ENCODE measurements at regions of chr11 and their contacts with region 1.

Region 1: DNA sequence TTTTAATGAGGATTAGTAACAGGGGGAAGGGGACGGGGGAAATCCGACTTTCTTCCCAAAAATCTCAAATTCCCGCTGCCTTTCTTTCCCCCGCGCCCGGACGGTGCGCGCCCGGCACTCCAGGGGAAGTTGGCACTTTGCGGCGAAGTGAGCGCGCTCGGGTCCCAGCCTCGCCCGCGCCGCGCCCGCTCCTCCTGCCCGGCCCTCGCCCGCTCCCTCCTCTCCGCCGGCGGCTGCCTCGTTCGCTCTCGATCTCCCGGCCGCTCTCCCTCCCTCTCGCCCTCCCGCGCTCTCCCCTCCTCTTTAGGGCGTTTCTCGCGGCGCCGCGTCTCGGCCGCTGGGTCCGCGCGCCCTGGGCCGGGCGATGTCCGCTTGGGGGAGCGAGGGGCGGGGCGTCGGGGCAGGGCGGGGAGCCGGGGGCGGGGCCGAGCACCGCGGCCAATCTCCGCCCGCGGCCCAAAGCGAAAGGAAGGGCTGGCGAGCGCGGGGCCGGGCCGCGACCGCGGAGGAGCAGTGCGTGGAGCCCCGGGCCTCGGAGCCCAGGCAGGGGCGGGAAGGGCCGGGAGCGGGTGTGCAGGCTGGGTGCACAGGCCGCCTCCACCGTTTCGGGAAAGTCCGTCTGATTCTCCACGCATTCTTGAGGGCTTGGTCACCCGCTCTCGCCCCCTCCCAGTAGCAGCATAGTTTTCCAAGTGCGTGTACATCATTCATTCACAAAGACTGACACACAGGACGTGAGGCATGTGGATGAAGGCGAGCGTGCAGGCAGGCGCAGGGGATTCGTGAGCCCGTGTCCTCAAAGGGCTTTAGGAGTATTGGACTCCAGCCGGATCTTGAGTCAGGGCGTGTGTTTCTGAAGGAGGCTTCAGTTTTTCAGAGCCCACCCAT is 65.1 kb downstream of the ETS1 start:
- DNase-seq: peak; percentile 81 to 90 (median 87)
- H3K4me3 ChIP-seq: peak overlapping the region; percentile 50 to 92
- H3K4me3 Mint-ChIP-seq: peak overlapping the region; percentile 92 to 100 (median 97)
- H3K27ac ChIP-seq: peak overlapping the region; percentile 89
- H3K27ac Mint-ChIP-seq: peak overlapping the region; percentile 96 to 99 (median 98)
- H3K4me1 ChIP-seq: peaks cover 45% of the 10 kb centered on the region
- H3K4me1 Mint-ChIP-seq: peaks cover 33 to 59% (median 44%) of the 10 kb centered on the region in 4 donors
- H3K27me3 ChIP-seq: no peaks in the 10 kb centered on the region
- H3K27me3 Mint-ChIP-seq: no peaks in the 10 kb centered on the region

Region 2: DNA sequence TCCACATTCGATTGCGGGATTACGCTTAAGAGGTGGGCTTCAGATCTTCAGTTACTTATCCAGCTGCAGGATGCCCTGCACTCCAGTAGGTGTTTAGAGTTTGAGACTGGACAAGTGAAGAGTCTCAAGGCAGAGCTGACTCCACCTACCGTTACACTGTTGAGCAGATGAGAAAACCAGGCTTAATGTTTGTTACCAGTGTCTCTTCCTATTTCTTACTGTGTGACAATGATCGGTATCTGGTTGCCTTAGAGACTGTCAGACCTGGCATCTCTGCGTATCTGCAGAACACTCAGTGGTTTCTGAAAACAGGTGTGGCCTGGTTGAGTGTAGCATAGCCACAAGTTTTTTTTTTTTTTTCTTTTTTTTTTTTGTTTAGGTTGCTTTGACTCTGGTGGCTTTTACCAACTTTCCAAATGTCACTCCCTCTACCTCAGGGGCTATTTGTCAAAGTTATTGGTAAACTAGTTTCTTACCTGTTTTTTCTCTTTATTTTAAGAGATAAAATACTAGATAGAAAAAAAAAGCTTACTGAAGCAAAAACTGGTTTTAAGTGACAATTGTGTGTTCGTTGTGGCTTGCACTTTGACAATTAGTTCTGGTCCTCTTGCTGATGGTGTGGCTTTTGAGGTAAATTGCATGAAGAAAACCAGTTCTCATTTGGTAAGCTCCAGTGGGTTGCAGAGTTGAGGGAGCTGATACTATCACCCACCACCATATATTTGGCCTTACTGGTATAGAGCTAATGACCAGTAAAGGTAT is 219.7 kb before region 1 on chr11:
- CTCF ChIA-PET with region 1: interaction called, 19 read pairs
- POLR2A ChIA-PET with region 1: interaction called, 888 read pairs
- intact Hi-C with region 1: loop called (anchors 1 kb)
- DNase-seq: peak; percentile 88 to 96 (median 94)
- H3K4me3 ChIP-seq: peak overlapping the region; percentile 54 to 77
- H3K4me3 Mint-ChIP-seq: peak overlapping the region; percentile 90 to 95 (median 92)
- H3K27ac ChIP-seq: peak overlapping the region; percentile 93
- H3K27ac Mint-ChIP-seq: peak overlapping the region; percentile 95 to 100 (median 98)
- H3K4me1 ChIP-seq: peaks cover 98% of the 10 kb centered on the region
- H3K4me1 Mint-ChIP-seq: peaks cover 72 to 97% (median 86%) of the 10 kb centered on the region in 4 donors
- H3K27me3 ChIP-seq: no peaks in the 10 kb centered on the region
- H3K27me3 Mint-ChIP-seq: no peaks in the 10 kb centered on the region

Region 3: DNA sequence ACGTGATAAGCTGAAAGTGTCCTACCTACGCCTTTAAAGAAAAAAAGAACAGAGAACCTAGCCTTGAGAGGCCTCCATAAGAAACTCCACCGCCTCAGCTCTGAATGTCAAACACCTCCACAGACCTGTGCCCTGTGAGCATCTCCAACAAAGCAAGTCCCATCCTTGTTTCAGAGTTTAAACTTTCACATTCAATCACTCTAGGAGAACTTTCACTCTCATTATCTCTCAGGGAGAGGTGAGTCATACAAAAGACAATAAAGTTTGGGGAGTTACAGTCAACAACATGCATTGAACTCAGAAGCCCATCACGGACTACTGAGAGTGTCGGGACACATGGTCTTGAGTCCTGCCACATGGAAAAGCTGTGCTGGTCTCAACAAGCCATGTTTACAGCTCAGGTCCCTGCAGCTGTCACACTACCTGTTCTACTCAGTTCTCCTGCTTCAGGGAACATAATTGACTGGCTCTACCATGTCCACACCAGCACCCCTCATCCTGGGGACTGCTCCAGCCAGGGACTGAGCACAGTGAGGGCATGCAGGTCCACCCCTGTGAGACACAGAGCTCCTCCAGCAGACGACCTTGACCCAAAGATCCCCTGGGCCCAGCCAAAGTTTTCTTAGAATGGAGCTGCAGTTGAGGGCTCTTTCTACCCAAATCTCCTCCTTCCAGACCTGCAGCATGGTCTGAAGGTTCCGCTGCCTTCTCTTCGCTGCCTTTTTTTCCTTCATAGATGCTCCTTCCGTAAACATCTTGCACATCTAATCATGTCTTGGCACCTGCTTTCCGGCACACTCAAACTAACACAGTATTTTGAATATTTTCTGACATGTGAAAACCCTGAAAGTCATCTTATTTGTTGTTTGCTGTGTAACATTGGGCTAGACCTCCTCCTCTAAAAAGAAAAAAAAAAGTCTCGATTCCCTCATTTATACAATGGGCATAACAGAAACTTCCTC is 49.9 kb before region 1 on chr11:
- CTCF ChIA-PET with region 1: interaction called, 31 read pairs
- POLR2A ChIA-PET with region 1: interaction called, 1,488 read pairs
- intact Hi-C with region 1: loop called (anchors 2 kb)
- DNase-seq: peak in 4 of 5 donors; percentile 51 to 82 (median 57)
- H3K4me3 ChIP-seq: peak overlapping the region; percentile 5 to 27
- H3K4me3 Mint-ChIP-seq: peak overlapping the region; percentile 70 to 93 (median 84)
- H3K27ac ChIP-seq: peak overlapping the region; percentile 94
- H3K27ac Mint-ChIP-seq: peak overlapping the region; percentile 98 to 99 (median 99)
- H3K4me1 ChIP-seq: peaks cover 100% of the 10 kb centered on the region
- H3K4me1 Mint-ChIP-seq: peaks cover 85 to 98% (median 92%) of the 10 kb centered on the region in 4 donors
- H3K27me3 ChIP-seq: no peaks in the 10 kb centered on the region
- H3K27me3 Mint-ChIP-seq: no peaks in the 10 kb centered on the region

Region 4: DNA sequence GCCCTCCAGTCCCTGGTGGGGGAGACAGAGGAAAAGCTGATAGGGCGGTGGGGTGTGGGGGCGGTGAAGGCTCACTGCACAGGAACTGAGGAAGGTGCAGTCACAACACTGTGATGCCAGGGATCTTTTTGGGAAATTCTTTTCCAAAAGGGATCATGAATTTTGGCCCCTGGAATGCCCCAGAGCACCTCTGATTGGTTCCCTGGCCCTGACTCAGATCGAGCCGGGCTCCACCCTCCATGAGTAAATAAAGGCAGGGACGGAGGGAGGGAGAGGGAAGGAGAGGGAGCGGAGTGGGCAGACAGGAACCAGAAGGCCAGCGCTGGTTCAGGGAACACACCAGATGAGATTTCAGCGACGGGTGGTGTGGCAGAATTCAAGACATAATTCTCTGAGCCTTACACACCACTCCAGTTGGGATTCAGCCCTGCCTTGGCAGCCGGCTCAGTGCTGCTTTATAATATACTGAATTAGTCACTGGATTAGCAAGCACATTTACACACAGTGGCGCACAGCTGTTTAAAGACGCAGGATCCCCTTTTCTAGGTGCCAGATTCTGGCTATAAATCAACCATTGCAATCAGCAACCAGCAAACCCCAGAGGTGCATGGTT is 15.2 kb before region 1 on chr11:
- CTCF ChIA-PET with region 1: interaction called, 81 read pairs
- POLR2A ChIA-PET with region 1: interaction called, 1,008 read pairs
- intact Hi-C with region 1: loop called (anchors 1 kb)
- DNase-seq: peak in 1 of 5 donors; percentile 77
- H3K4me3 ChIP-seq: peak overlapping the region; percentile 37 to 39
- H3K4me3 Mint-ChIP-seq: peak overlapping the region; percentile 81 to 100 (median 94)
- H3K27ac ChIP-seq: peak overlapping the region; percentile 89
- H3K27ac Mint-ChIP-seq: peak overlapping the region; percentile 92 to 99 (median 98)
- H3K4me1 ChIP-seq: peaks cover 100% of the 10 kb centered on the region
- H3K4me1 Mint-ChIP-seq: peaks cover 80 to 100% (median 89%) of the 10 kb centered on the region in 4 donors
- H3K27me3 ChIP-seq: no peaks in the 10 kb centered on the region
- H3K27me3 Mint-ChIP-seq: no peaks in the 10 kb centered on the region

Region 5: GRCh38 chr11:128624269-128625175 is 102.2 kb after region 1 on chr11:
- CTCF ChIA-PET with region 1: interaction called, 105 read pairs
- POLR2A ChIA-PET with region 1: interaction called, 949 read pairs
- intact Hi-C with region 1: loop called (anchors 1 kb)
- DNase-seq: peak; percentile 69 to 83 (median 77)
- H3K4me3 ChIP-seq: peak overlapping the region in 1 of 2 donors; percentile 28
- H3K4me3 Mint-ChIP-seq: peak overlapping the region; percentile 67 to 91 (median 80)
- H3K27ac ChIP-seq: peak overlapping the region; percentile 67
- H3K27ac Mint-ChIP-seq: peak overlapping the region; percentile 96 to 98 (median 97)
- H3K4me1 ChIP-seq: peaks cover 85% of the 10 kb centered on the region
- H3K4me1 Mint-ChIP-seq: peaks cover 76 to 100% (median 89%) of the 10 kb centered on the region in 4 donors
- H3K27me3 ChIP-seq: no peaks in the 10 kb centered on the region
- H3K27me3 Mint-ChIP-seq: no peaks in the 10 kb centered on the region

Region 6: GRCh38 chr11:128831174-128832120 is 309.1 kb after region 1 on chr11:
- CTCF ChIA-PET with region 1: interaction called, 4 read pairs
- POLR2A ChIA-PET with region 1: interaction called, 7 read pairs
- intact Hi-C with region 1: loop called (anchors 1 kb)
- DNase-seq: peak; percentile 79 to 85 (median 83)
- H3K4me3 ChIP-seq: peak overlapping the region in 1 of 2 donors; percentile 12
- H3K4me3 Mint-ChIP-seq: peak overlapping the region; percentile 46 to 91 (median 82)
- H3K27ac ChIP-seq: peak overlapping the region; percentile 76
- H3K27ac Mint-ChIP-seq: peak overlapping the region; percentile 86 to 98 (median 97)
- H3K4me1 ChIP-seq: peaks cover 24% of the 10 kb centered on the region
- H3K4me1 Mint-ChIP-seq: peaks cover 21 to 49% (median 36%) of the 10 kb centered on the region in 4 donors
- H3K27me3 ChIP-seq: no peaks in the 10 kb centered on the region
- H3K27me3 Mint-ChIP-seq: no peaks in the 10 kb centered on the region

Region 7: GRCh38 chr11:129013737-129014475 is 491.6 kb after region 1 on chr11:
- CTCF ChIA-PET with region 1: no interaction called
- POLR2A ChIA-PET with region 1: no interaction called
- intact Hi-C with region 1: no loop called
- DNase-seq: no peak
- H3K4me3 ChIP-seq: no peak overlapping the region
- H3K4me3 Mint-ChIP-seq: no peak overlapping the region
- H3K27ac ChIP-seq: no peak overlapping the region
- H3K27ac Mint-ChIP-seq: no peak overlapping the region
- H3K4me1 ChIP-seq: no peaks in the 10 kb centered on the region
- H3K4me1 Mint-ChIP-seq: peaks cover 0 to 2% (median 0%) of the 10 kb centered on the region in 4 donors
- H3K27me3 ChIP-seq: no peaks in the 10 kb centered on the region
- H3K27me3 Mint-ChIP-seq: peaks cover 6 to 9% of the 10 kb centered on the region in 2 donors